GM12878 (cell line): ENCODE measurements at regions of chr11 and their contacts with region 1.

Region 1: GRCh38 chr11:96279018-96279895 is 63.7 kb downstream of the MAML2 start:
- DNase-seq: no peak
- ATAC-seq: peak; percentile 71
- H3K4me3 ChIP-seq: no peak overlapping the region
- H3K27ac ChIP-seq: peak overlapping the region; percentile 42; the same call in 1 of the 2 replicates
- H3K4me1 ChIP-seq: peaks cover 37% of the 10 kb centered on the region
- H3K27me3 ChIP-seq: no peaks in the 10 kb centered on the region
- CTCF ChIP-seq: no peak
- EP300 ChIP-seq: no peak
- POLR2A ChIP-seq: no peak
- RAD21 ChIP-seq: no peak

Region 2: DNA sequence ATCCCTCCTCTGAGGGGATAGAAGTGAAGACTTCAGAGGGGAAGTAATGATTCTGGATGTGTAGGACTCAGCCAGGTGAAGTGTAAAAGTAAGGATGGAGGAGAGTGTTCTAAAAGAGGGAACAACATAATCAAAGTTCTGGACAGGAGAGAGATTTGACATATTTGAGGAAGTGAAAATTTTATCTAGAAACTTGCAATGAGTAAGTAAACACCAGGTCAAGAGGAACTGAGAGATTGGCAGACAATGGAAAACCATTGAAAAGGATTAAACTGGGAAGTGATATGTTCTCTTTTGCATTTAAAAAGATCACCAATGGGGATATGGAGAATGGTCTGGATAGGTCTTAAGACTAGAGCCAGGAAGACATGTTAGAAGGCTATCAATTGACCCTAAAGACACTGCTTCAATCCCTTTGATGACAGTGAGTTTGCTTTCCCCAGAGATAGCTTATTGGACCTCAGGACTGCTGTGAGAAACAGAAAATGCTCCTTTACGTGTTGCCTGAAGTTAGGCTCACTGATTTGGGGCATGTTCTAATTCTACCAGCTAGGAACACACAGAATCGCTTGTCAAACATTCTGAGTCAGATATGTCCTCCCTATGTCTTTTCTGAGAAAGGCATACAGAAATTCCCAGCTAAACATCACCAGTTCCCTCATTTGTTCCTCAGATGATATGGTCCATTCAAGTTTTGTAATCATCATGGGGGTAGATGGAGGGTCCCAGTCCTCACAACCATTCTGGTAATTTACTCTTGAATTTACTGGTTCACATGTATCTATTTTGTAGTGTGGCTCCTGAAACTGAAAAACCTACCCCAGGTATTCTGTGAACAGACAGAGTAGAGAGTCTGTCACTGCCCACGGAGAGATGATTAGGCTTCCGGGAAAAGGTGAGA is 81.2 kb before region 1 on chr11:
- CTCF ChIA-PET with region 1: no interaction called
- POLR2A ChIA-PET with region 1: interaction called, 11 read pairs
- RAD21 ChIA-PET with region 1: no interaction called
- SMC1A ChIA-PET with region 1: interaction called, 3 read pairs
- in situ Hi-C with region 1: no loop called
- intact Hi-C with region 1: no loop called
- DNase-seq: no peak
- ATAC-seq: peak; percentile 83
- H3K4me3 ChIP-seq: 0 out of 2 replicates have a peak overlapping the region, but pooled peaks have one; percentile 3
- H3K27ac ChIP-seq: peak overlapping the region; percentile 98
- H3K4me1 ChIP-seq: peaks cover 41% of the 10 kb centered on the region
- H3K27me3 ChIP-seq: no peaks in the 10 kb centered on the region
- CTCF ChIP-seq: no peak
- EP300 ChIP-seq: peak; percentile 82 to 97
- POLR2A ChIP-seq: no peak
- RAD21 ChIP-seq: no peak; the same call in 1 of the 2 replicates

Region 3: GRCh38 chr11:96293598-96294021 is 14.4 kb after region 1 on chr11:
- CTCF ChIA-PET with region 1: interaction called, 5 read pairs
- POLR2A ChIA-PET with region 1: interaction called, 3 read pairs
- RAD21 ChIA-PET with region 1: no interaction called
- SMC1A ChIA-PET with region 1: interaction called, 14 read pairs
- in situ Hi-C with region 1: no loop called
- intact Hi-C with region 1: no loop called
- DNase-seq: peak; percentile 69
- ATAC-seq: peak; percentile 91
- H3K4me3 ChIP-seq: peak overlapping the region; percentile 34; the same call in 1 of the 2 replicates
- H3K27ac ChIP-seq: peak overlapping the region; percentile 65
- H3K4me1 ChIP-seq: peaks cover 32% of the 10 kb centered on the region
- H3K27me3 ChIP-seq: no peaks in the 10 kb centered on the region
- CTCF ChIP-seq: no peak
- EP300 ChIP-seq: no peak; a peak in 1 of 4 replicates
- POLR2A ChIP-seq: no peak
- RAD21 ChIP-seq: no peak

Region 4: DNA sequence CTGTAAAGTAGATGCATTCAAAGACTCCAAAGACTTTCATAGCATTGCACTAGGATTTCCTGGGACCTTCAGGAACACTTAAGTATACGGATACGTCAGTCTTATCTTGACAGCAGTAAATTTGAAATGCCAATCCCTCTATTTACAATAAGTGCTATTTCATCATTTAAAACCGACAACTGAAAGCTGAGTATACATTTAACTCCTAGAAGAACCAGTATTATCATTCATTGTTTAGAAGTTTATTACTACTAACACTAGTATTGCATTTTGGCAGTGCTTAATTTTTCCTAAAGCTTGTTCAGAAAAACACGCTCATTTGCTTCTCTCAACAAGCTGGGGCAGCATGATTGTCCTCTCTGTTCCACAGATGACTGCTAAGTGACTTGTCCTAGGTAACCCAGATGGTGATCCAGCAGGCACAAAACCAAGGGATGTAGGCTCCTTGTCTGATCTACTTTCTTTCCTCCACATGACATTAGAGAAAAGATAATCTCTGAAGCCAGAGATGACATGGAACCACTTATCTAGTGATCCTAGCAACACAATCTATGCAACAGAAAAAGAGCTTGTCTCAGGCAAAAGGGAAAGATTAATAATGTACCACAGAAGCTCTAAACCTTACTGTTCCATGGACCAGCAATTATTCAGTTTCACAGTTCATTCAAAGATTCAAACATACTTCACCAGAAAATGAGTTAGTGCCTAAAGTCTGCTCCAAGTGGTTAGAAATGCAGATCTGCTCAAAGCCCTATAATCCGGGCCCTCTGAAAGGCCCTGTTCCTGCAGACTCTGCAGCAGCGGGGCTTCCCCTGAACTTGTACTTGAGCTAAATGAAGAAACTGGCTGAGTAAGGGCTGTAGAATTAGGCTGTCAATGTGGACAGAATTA is 58.5 kb after region 1 on chr11:
- CTCF ChIA-PET with region 1: interaction called, 39 read pairs
- POLR2A ChIA-PET with region 1: interaction called, 4 read pairs
- RAD21 ChIA-PET with region 1: interaction called, 44 read pairs
- SMC1A ChIA-PET with region 1: interaction called, 76 read pairs
- in situ Hi-C with region 1: no loop called
- intact Hi-C with region 1: no loop called
- DNase-seq: no peak
- ATAC-seq: peak; percentile 52
- H3K4me3 ChIP-seq: peak overlapping the region; percentile 100
- H3K27ac ChIP-seq: peak overlapping the region; percentile 80
- H3K4me1 ChIP-seq: peaks cover 4% of the 10 kb centered on the region
- H3K27me3 ChIP-seq: no peaks in the 10 kb centered on the region
- CTCF ChIP-seq: no peak
- EP300 ChIP-seq: no peak
- POLR2A ChIP-seq: no peak
- RAD21 ChIP-seq: no peak

Region 5: DNA sequence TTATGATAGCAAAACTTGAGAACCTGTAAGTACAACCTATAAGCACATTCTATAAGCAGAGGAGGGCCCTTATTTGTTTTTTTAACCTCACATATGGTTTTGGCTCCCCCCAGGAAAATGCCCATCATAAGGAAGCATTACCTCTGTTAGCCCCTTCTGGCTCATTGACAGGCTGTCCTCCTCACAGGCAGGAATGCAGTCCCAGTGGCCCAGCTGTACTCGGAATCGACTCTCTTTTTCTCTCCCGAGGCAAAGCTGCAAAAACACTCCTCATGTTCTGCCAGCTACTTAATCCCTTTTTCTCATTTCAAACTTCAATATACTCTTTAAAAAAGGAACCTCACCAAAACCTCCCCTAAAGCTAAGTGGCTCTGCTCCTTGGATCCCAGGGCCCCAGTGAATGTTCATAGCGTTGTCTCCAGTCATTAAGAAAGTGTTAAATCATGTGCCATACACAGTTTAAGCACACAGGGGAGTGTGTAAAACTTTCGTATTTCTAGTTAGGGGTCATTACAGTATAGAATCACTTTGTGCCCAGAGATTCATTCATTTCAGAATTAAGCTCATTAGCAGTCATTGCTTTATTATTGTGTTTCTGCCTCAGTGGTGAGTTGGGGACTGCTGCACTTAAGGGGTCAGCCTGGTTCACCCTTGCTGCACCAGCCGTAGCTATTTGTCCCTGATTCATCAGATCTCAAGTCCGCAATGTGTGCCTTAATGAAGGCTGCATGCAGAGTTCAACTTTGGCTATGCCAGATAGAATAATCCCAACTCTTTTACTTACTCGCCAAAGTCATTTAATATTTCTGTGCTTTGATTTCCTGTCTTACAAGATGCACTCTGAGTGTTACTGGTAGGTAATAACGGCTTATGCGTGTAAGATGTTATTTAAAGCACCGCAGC is 168.2 kb after region 1 on chr11:
- CTCF ChIA-PET with region 1: no interaction called
- POLR2A ChIA-PET with region 1: no interaction called
- RAD21 ChIA-PET with region 1: no interaction called
- SMC1A ChIA-PET with region 1: no interaction called
- in situ Hi-C with region 1: no loop called
- intact Hi-C with region 1: no loop called
- DNase-seq: no peak
- ATAC-seq: no peak
- H3K4me3 ChIP-seq: no peak overlapping the region
- H3K27ac ChIP-seq: no peak overlapping the region
- H3K4me1 ChIP-seq: no peaks in the 10 kb centered on the region
- H3K27me3 ChIP-seq: peaks cover 0 to 3% of the 10 kb centered on the region in 2 experiments; a peak in 2 of 4 replicates
- CTCF ChIP-seq: no peak
- EP300 ChIP-seq: no peak
- POLR2A ChIP-seq: no peak
- RAD21 ChIP-seq: no peak

Region 6: GRCh38 chr11:96595011-96595410 is 315.8 kb after region 1 on chr11:
- CTCF ChIA-PET with region 1: no interaction called
- POLR2A ChIA-PET with region 1: no interaction called
- RAD21 ChIA-PET with region 1: no interaction called
- SMC1A ChIA-PET with region 1: no interaction called
- in situ Hi-C with region 1: no loop called
- intact Hi-C with region 1: no loop called
- DNase-seq: no peak
- ATAC-seq: no peak
- H3K4me3 ChIP-seq: no peak overlapping the region
- H3K27ac ChIP-seq: no peak overlapping the region
- H3K4me1 ChIP-seq: no peaks in the 10 kb centered on the region
- H3K27me3 ChIP-seq: no peaks in the 10 kb centered on the region; a peak in 1 of 4 replicates
- CTCF ChIP-seq: no peak
- EP300 ChIP-seq: no peak
- POLR2A ChIP-seq: no peak
- RAD21 ChIP-seq: no peak